Activated B cell treated with CpG ODN at 0.5 μM for 24 hours (primary cell): ENCODE measurements at regions of chr12 and their contacts with region 1.

Region 1: DNA sequence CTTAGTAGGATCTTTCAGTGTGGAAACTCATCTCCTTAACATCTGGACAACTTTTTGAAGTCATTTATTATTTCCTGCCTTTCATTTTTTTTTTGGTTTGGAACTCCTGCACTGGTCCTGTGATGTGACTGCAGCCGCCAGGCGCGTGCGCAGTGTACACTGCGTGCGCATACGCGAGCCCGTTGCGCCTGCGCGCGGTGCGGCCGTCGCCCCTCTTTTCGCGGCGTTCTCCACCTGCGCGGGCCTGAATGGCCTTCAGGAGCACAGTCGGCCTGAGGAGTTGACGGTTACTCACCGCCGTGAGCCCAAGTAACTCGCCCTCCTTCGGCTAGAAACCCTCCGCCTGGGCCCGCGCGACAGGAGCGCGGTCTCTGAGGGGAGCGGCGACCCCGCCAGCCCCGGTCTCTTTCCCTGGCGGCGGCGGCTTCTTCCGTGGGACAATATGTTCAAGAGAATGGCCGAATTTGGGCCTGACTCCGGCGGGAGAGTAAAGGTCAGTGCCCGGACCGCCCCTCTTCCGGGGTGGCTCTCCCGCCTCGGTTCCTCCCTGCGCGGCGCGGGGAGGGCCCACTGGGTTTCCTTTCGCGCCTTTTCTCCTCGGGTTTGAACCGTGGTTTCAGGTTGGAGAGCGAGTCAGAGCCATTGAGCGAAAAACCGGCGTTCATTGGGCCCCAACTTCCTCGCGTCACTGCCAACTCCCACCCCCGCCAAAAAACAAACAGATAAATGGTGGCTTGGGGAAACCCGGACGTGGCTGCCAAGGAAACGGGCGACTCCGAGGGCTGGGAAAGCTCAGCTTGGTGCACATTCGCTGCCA is at the start of gene YEATS4:
- DNase-seq: peak; percentile 82
- ATAC-seq: peak; percentile 81
- H3K4me3 Mint-ChIP-seq: peak within 1 kb of the TSS; percentile 88
- H3K27ac Mint-ChIP-seq: peak within 1 kb of the TSS; percentile 81
- H3K4me1 Mint-ChIP-seq: peaks cover 20% of the 10 kb centered on the region
- H3K27me3 Mint-ChIP-seq: no peaks in the 10 kb centered on the region
- CTCF ChIP-seq: no peak
- total RNA-seq, gene YEATS4: 14.9 and 19.3 TPM in 2 replicates

Region 2: DNA sequence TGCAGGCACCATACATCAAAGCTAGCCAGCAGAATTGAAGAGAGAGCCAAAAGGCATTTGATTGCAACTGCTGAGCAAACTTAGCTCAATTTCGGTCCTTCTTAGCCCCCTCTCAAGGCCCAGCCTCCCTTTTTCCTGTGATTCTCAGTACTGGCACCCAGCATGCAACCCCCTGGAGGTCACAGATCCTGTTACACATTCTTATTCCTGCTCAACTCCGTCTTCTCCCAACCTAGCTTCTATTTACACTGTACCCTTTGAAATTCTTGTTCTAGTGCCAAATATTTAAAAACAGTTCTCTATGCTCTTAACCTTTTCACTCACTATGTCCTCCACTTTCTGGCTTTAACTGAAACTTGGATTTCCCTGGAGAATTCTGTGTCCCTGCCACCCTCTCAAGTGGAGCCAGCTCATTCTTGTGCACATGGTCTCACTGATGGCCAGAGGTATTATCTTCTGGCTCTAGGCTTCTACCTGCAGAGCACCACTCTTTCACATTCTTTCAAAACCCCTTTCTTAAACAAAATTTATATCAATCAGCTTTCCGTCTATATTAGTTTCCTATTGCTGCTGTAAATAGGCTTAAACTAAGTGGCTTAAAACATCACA is 251.6 kb before region 1 on chr12:
- CTCF ChIA-PET with region 1: no interaction called
- POLR2A ChIA-PET with region 1: no interaction called
- intact Hi-C with region 1: no loop called
- DNase-seq: no peak
- ATAC-seq: no peak
- H3K4me3 Mint-ChIP-seq: no peak overlapping the region
- H3K27ac Mint-ChIP-seq: no peak overlapping the region
- H3K4me1 Mint-ChIP-seq: peaks cover 7% of the 10 kb centered on the region
- H3K27me3 Mint-ChIP-seq: peaks cover 10% of the 10 kb centered on the region
- CTCF ChIP-seq: no peak

Region 3: GRCh38 chr12:69239352-69239921 is 120.3 kb before region 1 on chr12 and contains the start of gene CPSF6:
- CTCF ChIA-PET with region 1: no interaction called
- POLR2A ChIA-PET with region 1: no interaction called
- intact Hi-C with region 1: loop called (anchors 5 kb)
- DNase-seq: peak; percentile 96
- ATAC-seq: peak; percentile 93
- H3K4me3 Mint-ChIP-seq: peak within 1 kb of the TSS; percentile 99
- H3K27ac Mint-ChIP-seq: peak within 1 kb of the TSS; percentile 96
- H3K4me1 Mint-ChIP-seq: peaks cover 51% of the 10 kb centered on the region
- H3K27me3 Mint-ChIP-seq: no peaks in the 10 kb centered on the region
- CTCF ChIP-seq: no peak
- total RNA-seq, gene CPSF6: 95.5 and 104 TPM in 2 replicates

Region 4: GRCh38 chr12:69330475-69331473 is 29.0 kb before region 1 on chr12:
- CTCF ChIA-PET with region 1: interaction called, 10 read pairs
- POLR2A ChIA-PET with region 1: interaction called, 5 read pairs
- intact Hi-C with region 1: loop called (anchors 2 kb)
- DNase-seq: peak; percentile 33
- ATAC-seq: peak; percentile 85
- H3K4me3 Mint-ChIP-seq: peak overlapping the region; percentile 86
- H3K27ac Mint-ChIP-seq: peak overlapping the region; percentile 92
- H3K4me1 Mint-ChIP-seq: peaks cover 26% of the 10 kb centered on the region
- H3K27me3 Mint-ChIP-seq: no peaks in the 10 kb centered on the region
- CTCF ChIP-seq: no peak

Region 5: GRCh38 chr12:69570545-69571399 is 211.0 kb after region 1 on chr12:
- CTCF ChIA-PET with region 1: interaction called, 91 read pairs
- POLR2A ChIA-PET with region 1: interaction called, 17 read pairs
- intact Hi-C with region 1: loop called (anchors 1 kb)
- DNase-seq: no peak
- ATAC-seq: peak; percentile 82
- H3K4me3 Mint-ChIP-seq: no peak overlapping the region
- H3K27ac Mint-ChIP-seq: no peak overlapping the region
- H3K4me1 Mint-ChIP-seq: no peaks in the 10 kb centered on the region
- H3K27me3 Mint-ChIP-seq: no peaks in the 10 kb centered on the region
- CTCF ChIP-seq: peak; percentile 88

Region 6: DNA sequence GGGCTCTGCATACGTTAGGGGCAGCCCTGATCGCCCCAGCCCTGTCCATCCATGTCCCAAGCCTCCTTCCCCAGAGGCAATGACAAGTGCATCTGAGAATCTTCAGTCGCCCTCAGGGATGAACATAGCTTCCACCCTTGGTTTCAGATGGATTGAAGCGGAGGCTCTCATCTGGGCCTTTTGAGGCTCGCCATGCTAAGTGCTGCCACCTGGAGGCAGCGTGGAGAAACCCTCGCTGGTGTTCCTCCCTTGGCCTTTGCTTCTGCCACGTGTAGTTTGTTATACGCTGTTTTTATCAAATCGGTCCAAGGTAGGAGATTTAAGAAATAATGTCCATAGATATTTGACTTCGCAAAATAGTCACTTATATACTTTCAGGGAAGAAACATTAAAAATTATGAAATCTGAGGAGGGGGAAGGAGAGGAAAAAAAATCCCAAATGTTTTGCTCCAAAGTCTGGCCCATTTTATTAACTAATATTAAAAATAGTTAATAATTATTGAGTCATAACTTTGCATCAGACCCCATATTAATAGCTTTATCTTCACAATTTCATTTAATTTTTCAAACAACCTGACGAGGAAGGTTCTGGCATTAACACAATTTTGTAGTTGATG is 279.8 kb after region 1 on chr12:
- CTCF ChIA-PET with region 1: interaction called, 39 read pairs
- POLR2A ChIA-PET with region 1: interaction called, 5 read pairs
- intact Hi-C with region 1: loop called (anchors 1 kb)
- DNase-seq: peak; percentile 37
- ATAC-seq: peak; percentile 77
- H3K4me3 Mint-ChIP-seq: no peak overlapping the region
- H3K27ac Mint-ChIP-seq: no peak overlapping the region
- H3K4me1 Mint-ChIP-seq: no peaks in the 10 kb centered on the region
- H3K27me3 Mint-ChIP-seq: no peaks in the 10 kb centered on the region
- CTCF ChIP-seq: peak; percentile 77

Region 7: DNA sequence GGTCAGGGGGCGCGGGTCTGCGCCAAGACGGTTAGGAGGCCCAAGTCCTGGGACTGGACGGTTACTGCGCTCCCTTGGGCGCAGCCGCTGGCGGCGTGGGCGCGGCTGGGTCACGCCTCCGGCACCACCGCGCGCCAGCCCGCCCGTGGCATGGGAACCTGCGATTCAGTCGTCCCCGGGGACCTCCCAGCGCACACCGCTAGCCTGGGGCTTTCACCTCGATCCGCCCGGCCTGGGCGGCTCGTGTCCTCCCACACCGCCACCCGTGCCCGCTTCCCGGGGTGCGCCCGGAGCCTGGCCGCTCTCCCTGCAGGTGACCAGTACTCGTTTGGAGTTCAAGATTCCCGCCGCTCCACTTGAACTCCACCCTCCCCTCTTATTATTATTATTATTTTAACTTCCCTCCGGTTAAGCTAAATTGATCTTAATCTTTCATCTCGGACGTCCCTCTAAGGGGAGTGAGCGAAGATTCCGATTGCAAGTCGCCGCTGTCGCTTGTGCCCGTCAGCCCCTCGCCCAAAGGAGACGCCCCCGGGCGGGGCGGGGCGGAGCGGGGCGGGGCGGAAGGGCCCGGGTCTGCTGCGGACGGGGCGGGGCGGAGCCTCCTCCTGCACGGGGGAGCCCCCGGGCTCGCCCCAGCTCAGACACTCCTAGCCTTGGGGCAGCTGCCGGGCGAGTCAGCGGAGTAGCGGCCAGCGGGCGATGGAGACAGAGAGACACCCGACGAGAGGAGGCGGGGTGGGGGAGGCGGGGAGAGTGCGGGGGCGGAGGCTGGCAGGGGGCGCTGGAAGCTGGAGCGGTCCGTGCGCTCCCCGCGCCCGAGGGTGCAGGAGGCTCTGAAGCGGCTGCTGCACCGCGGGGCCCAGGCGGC is 1006.1 kb after region 1 on chr12 and contains the start of gene KCNMB4:
- CTCF ChIA-PET with region 1: no interaction called
- POLR2A ChIA-PET with region 1: no interaction called
- intact Hi-C with region 1: loop called (anchors 10 kb)
- DNase-seq: peak; percentile 79
- ATAC-seq: peak; percentile 90
- H3K4me3 Mint-ChIP-seq: peak within 1 kb of the TSS; percentile 91
- H3K27ac Mint-ChIP-seq: no peak within 1 kb of the TSS
- H3K4me1 Mint-ChIP-seq: peaks cover 20% of the 10 kb centered on the region
- H3K27me3 Mint-ChIP-seq: no peaks in the 10 kb centered on the region
- CTCF ChIP-seq: no peak
- total RNA-seq, gene KCNMB4: 0.71 and 0.86 TPM in 2 replicates